CD8-positive, alpha-beta memory T cell (primary cell): ENCODE measurements at regions of chr3 and their contacts with region 1.

Region 1: GRCh38 chr3:13495921-13496723 is 16.0 kb downstream of the HDAC11 start:
- DNase-seq: peak; percentile 41 to 73 (median 50)
- H3K4me3 ChIP-seq: no peak overlapping the region
- H3K4me3 Mint-ChIP-seq: no peak overlapping the region
- H3K27ac ChIP-seq: no peak overlapping the region
- H3K27ac Mint-ChIP-seq: peak overlapping the region in 1 of 8 donors; percentile 25
- H3K4me1 ChIP-seq: no peaks in the 10 kb centered on the region
- H3K4me1 Mint-ChIP-seq: peaks cover 0 to 8% (median 6%) of the 10 kb centered on the region in 3 donors
- H3K27me3 ChIP-seq: no peaks in the 10 kb centered on the region
- H3K27me3 Mint-ChIP-seq: peaks cover 0 to 1% of the 10 kb centered on the region in 2 donors

Region 2: DNA sequence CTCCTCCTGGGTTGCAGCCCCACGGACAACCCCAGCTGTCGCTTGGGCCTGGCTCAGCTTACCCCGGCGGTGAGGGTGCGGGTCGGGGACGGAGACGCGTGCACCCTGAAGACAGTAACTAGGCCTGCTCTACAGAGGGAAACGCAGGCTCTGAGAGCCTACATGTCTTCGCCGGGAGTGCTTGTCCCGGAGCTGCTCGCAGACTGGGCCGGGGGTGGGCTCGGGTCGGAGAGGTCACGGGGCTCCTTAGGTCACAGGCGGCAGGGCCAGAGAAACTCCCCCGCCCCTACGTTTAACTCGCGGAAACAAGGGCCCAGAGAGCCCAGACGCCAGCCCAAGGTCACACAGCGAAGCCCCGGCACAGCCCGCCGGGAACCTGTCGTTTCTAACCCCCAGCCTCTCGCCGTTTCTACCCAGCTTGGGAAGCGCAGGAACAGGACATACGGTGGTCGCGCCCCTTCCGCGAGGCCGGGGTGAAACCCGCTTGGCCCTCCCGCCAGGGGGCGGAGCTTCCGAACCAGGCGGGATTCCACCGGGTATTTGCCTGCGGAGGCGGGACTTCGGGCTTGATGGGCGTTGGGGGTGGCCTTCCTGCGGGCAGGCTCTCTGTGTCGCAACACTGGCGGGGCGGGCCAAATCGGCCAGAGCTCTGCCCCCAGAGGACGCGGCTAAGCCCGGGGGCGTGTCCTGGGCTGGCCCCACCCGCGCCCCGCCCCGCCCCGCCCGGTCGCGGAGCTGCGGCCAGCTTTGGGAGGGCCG is 16.4 kb before region 1 on chr3 and contains the start of gene HDAC11:
- CTCF ChIA-PET with region 1: interaction called, 19 read pairs
- POLR2A ChIA-PET with region 1: no interaction called
- DNase-seq: peak; percentile 96 to 99 (median 98)
- H3K4me3 ChIP-seq: peak within 1 kb of the TSS; percentile 84
- H3K4me3 Mint-ChIP-seq: peak within 1 kb of the TSS; percentile 91 to 95 (median 94)
- H3K27ac ChIP-seq: peak within 1 kb of the TSS; percentile 90
- H3K27ac Mint-ChIP-seq: peak within 1 kb of the TSS; percentile 81 to 95 (median 93)
- H3K4me1 ChIP-seq: peaks cover 16% of the 10 kb centered on the region
- H3K4me1 Mint-ChIP-seq: peaks cover under 1 to 29% (median 7%) of the 10 kb centered on the region in 3 donors
- H3K27me3 ChIP-seq: no peaks in the 10 kb centered on the region
- H3K27me3 Mint-ChIP-seq: peaks cover 0 to 2% of the 10 kb centered on the region in 2 donors
- total RNA-seq, gene HDAC11: 2.6 to 3.2 TPM